ENCODE measurements at regions of chr11 and their contacts with region 1.

Region 1: DNA sequence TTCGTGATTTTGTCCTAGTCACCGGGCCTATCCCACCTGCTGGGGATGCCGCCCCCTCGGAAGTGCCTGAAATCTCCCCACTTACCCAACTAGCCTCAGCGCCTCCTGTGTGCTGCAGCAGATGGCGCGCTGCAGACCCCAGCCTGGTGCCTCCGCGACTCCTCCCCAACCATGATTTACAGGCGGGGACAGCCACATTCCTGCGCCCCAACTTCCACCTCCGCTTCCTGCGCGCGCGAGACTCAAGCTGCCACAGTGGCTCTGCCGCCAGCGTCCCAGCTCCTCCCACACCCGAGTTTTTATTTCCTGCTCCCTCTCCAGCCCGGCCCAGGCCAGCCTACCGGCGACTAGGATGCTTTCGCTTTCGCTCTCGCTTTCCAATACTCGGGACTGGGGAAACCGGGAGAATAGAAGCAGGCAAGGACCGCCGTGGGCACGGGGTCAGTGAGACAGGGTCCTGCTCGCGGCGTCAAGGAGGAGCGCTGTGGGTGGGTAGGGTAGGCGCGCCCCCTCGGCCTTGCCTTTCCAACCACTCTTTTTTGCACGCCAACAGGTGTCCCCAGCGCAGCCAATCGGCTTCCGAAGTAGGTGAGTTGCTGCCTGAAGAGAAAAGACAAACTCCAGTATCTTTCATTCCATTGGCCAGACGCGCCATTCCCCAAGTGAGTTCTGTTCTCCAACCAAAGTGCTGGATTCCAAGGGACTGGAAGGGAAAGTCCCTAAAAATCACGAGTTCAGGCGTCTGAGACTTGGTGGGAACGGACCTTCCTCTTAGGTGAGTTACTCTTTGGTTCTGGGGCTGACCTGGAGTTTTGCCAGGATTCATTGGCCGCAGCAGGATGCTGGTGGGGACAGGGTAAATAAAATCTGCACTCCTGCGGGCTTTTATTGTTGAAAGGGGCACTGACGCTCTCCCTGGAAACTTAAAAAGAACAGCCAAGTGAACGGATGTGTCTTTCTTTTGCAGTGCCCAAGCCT is at the start of gene FAM111A:
- DNase-seq: peak; percentile 67 to 82 (median 72)
- ATAC-seq: peak; percentile 85
- H3K4me3 ChIP-seq: peak within 1 kb of the TSS; percentile 74
- H3K27ac ChIP-seq: peak within 1 kb of the TSS; percentile 55; the same call in 2 of the 3 replicates
- H3K4me1 ChIP-seq: peaks cover 14 to 19% of the 10 kb centered on the region in 2 experiments
- H3K27me3 ChIP-seq: no peaks in the 10 kb centered on the region
- CTCF ChIP-seq: peak; percentile 43 to 46 (median 44); a peak in 5 of 6 replicates
- EP300 ChIP-seq: no peak
- POLR2A ChIP-seq: peak; percentile 66
- RAD21 ChIP-seq: peak in 1 of 2 experiments; percentile 27; a peak in 2 of 4 replicates
- polyA plus RNA-seq, gene FAM111A: 14.8 to 16.5 TPM

Region 2: DNA sequence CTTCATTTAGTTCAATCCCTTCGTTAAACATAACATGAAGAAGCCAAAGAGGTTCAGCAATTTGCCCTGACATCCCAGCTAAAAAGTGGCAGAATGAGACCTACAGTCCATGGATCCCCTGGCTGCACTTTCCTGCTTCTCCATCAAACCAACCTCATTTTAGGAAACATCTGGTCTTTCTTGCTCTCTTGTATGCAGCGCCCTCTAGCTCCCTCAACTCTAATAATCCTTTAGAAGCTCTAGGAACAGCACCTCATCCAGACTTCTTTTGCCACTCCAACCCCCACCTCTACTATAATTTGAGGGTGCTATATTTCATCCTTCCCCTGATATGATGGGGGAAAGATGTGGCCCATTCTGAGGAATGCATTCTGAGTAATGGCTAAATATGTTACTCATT is 513.0 kb before region 1 on chr11:
- CTCF ChIA-PET with region 1: no interaction called
- POLR2A ChIA-PET with region 1: no interaction called
- in situ Hi-C with region 1: loop called (anchors 25 kb)
- intact Hi-C with region 1: no loop called
- DNase-seq: peak; percentile 22 to 69 (median 38)
- ATAC-seq: peak; percentile 86
- H3K4me3 ChIP-seq: no peak overlapping the region
- H3K27ac ChIP-seq: no peak overlapping the region
- H3K4me1 ChIP-seq: no peaks in the 10 kb centered on the region
- H3K27me3 ChIP-seq: no peaks in the 10 kb centered on the region
- CTCF ChIP-seq: peak; percentile 73 to 82 (median 75)
- EP300 ChIP-seq: no peak
- POLR2A ChIP-seq: no peak
- RAD21 ChIP-seq: peak; percentile 42 to 71; a peak in 3 of 4 replicates

Region 3: DNA sequence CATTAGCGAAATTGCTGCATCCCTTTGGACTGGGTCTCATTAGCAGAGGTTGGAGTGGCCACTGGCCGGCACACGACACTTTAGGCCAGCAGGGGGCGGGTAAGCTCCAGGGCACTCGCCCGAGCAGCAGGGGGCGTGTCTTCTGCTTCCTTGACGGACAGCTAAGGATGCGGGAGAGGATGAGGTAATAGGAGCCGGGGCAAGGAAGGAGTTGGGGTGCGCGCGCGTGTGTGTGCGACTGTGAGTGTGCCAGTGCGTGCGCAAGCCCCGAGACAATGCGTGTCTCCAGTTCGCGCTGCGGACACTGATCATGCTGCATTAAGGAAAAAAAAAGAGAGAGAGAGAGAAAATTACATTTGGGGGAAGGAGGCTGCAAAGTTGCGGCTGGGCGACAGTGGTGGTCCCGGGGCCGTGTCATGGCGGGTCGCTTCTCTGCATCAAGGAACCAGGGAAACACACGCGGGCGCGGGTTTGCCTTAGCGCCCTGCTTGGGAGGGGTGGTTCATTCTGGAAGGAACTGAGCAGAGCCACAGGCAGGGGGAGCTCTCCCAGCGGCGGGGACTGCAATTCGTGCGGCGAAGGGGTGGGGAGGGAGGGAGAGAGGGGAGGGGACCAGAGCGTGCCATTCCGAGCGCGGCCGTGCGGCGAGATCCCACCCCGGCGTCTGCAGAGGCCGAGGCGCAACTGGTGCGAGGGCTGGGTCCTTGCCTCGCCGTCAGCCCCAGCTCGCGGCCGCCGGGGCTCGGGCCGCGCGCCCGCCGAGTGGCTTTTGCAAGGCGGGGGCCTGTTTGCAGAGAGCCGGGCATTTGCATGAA is 28.9 kb after region 1 on chr11 and contains the start of gene DTX4:
- CTCF ChIA-PET with region 1: no interaction called
- POLR2A ChIA-PET with region 1: no interaction called
- in situ Hi-C with region 1: no loop called
- intact Hi-C with region 1: no loop called
- DNase-seq: peak; percentile 87 to 95 (median 92)
- ATAC-seq: peak; percentile 98
- H3K4me3 ChIP-seq: peak within 1 kb of the TSS; percentile 39
- H3K27ac ChIP-seq: peak within 1 kb of the TSS; percentile 54; the same call in 1 of the 3 replicates
- H3K4me1 ChIP-seq: peaks cover 0 to 20% of the 10 kb centered on the region in 2 experiments; a peak in 3 of 5 replicates
- H3K27me3 ChIP-seq: peaks cover 14 to 32% of the 10 kb centered on the region in 2 experiments
- CTCF ChIP-seq: peak; percentile 90 to 98 (median 95)
- EP300 ChIP-seq: no peak
- POLR2A ChIP-seq: no peak
- RAD21 ChIP-seq: peak; percentile 79 to 84
- polyA plus RNA-seq, gene DTX4: 0.03 TPM in 1 of 2 experiments, not detected in the other